AG04449 (cell line): ENCODE measurements at regions of chr17 and their contacts with region 1.

Region 1: DNA sequence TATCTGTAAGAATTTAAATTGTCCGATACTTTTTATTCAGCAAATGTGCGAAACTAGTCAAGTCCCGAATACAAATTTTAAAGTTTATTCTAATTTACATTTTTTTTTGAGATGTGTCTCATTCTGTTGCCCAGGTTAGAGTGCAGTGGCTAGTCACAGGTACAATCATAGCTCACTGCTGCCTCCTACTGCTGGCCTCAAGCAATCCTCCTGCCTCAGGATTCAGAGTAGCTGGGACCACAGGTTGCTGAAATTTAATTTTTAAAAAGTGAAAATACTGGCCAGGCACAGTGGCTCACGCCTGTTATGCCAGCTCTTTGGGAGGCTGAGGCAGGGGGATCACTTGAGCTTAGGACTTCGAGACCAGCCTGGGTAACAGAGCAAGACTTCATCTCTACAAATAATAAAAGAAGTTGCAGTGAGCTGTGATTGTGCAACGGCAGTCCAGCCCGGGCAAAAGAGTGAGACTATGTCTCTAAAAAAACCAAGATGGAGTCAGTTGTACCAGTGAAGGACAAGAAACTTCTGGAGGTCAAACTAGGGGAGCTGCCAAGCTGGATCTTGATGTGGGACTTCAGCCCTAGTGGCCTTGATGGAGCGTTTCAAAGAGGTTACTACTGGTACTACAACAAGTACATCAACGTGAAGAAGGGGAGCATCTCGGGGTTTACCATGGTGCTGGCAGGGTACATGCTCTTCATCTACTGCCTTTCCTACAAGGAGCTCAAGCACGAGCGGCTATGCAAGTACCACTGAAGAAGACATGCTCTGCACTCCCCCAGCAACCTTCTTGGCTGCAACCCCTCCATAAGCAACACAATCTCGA is 5.6 kb downstream of the POLG2 start:
- DNase-seq: no peak
- H3K4me3 ChIP-seq: no peak overlapping the region
- CTCF ChIP-seq: peak; percentile 65

Region 2: GRCh38 chr17:64306850-64307463 is 184.3 kb before region 1 on chr17:
- CTCF ChIA-PET with region 1: interaction called, 10 read pairs
- POLR2A ChIA-PET with region 1: no interaction called
- DNase-seq: peak; percentile 2
- H3K4me3 ChIP-seq: no peak overlapping the region
- CTCF ChIP-seq: peak; percentile 59

Region 3: DNA sequence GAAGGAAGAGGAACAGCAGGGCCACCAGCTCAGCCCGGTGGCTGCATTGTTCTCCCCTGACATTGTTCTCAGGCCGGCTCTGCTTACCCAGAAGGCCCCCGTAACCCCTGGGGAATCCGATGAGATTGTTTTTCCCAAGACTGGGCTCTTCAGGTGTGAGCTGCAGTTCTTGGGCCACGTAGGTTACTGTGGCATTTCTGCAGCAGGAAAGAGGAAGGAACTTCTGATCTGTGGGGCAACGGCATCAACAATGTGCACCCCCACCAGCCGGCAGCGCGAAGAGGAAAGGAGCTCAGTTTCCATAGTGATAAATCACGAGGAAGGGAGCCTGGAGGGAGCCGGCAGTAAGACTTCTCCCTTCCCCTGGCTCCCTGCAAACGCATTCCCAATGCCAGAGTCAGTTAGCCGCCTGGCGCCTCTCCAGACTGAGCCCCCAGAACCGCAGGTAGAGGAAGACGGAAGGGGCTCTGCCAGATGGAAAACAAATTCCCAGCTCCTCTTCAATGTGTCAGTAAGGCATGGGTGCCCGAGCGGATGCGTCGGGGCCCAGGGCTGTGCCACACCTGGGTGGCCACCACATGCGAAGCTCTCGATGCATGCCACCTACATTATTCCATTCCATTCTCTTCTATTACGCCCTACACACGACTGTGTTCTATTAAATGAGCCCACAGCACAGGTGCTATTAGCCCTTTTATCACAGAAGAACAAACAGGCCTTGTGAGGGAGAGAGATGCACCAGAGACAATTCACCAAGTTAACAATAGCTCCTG is 79.1 kb before region 1 on chr17:
- CTCF ChIA-PET with region 1: interaction called, 451 read pairs
- POLR2A ChIA-PET with region 1: interaction called, 3 read pairs
- DNase-seq: no peak
- H3K4me3 ChIP-seq: peak overlapping the region; percentile 15; the same call in 1 of the 2 replicates
- CTCF ChIP-seq: no peak

Region 4: DNA sequence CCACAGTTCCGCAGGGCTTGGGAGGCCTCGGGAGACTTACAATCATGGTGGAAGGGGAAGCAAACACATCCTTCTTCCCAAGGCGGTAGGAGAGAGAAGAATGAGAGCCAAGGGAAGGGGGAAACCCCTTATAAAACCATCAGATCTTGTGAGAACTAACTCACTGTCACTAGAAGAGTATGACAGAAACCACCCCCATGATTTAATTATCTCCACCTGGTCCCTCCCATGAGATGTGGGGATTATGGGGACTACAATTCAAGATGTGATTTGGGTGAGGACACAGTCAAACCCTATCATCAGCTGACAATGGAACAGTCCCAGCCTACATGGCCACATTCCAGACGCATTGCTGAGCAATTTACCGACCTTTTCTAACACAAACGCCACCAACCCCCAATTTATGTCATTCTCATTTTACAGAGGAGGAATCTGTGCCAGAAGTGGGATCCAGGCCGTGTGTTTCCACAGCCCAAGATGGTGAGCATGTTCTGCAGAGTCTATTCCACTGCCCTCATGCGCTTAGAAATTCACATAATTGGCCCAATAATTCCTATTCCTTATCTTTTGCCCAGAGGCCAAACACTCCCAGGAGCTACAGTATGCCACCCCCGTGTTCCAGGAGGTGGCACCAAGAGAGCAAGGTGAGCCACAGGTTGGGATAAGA is 25.1 kb before region 1 on chr17:
- CTCF ChIA-PET with region 1: interaction called, 12 read pairs
- POLR2A ChIA-PET with region 1: no interaction called
- DNase-seq: no peak
- H3K4me3 ChIP-seq: no peak overlapping the region
- CTCF ChIP-seq: no peak

Region 5: GRCh38 chr17:64479650-64480049 is 11.6 kb before region 1 on chr17:
- CTCF ChIA-PET with region 1: interaction called, 101 read pairs
- POLR2A ChIA-PET with region 1: interaction called, 7 read pairs
- DNase-seq: no peak
- H3K4me3 ChIP-seq: no peak overlapping the region
- CTCF ChIP-seq: no peak

Region 6: DNA sequence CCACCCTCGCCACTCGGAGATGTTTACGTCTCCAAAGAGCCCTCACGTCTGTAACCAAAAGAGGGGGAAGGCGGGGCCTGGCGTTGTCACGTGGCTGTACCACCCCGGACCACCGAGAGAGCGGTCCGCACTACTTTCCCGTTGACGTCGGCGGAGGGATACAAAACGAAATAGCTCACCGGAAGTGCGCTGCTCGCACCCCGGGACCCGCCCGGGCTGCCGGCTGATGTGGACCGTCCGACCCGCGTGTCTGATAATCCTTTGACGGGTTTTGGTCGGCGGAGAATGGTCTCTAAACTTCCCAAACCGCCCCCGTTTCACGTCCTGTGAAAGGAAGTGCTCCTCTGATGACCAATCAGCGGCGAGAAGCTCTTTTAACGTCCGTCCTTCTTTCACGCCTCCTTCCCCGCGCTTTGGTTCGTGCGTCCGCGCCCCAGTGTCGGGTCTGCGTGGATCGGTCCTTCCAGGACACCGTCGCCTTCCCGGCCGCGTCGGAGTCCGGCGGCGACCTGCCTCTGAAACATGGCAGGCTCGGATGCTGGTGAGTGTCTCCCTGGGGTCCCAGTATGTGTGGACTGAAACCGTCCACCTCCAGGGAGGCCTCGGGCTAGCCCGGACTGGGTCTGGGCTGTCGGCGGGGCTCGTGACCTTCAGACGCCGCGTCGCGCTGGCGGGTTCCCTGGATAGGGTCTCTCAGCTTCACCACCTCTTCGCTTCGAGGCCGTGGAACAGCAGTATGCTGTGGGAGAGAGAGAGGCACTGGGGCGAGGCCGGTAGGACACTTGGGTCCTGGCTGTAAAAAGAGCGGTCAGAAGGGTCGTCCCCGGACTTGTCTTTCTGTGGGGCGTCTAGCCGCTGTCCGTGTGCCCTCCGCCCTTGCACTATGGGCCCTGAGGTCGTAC is 15.6 kb after region 1 on chr17 and contains the start of gene CEP95:
- CTCF ChIA-PET with region 1: interaction called, 78 read pairs
- POLR2A ChIA-PET with region 1: interaction called, 55 read pairs
- DNase-seq: peak; percentile 95
- H3K4me3 ChIP-seq: peak within 1 kb of the TSS; percentile 97
- CTCF ChIP-seq: no peak

Region 7: GRCh38 chr17:64534175-64534574 is 42.9 kb after region 1 on chr17:
- CTCF ChIA-PET with region 1: no interaction called
- POLR2A ChIA-PET with region 1: no interaction called
- DNase-seq: no peak
- H3K4me3 ChIP-seq: no peak overlapping the region
- CTCF ChIP-seq: no peak

Region 8: GRCh38 chr17:64572638-64573154 is 81.4 kb after region 1 on chr17:
- CTCF ChIA-PET with region 1: no interaction called
- POLR2A ChIA-PET with region 1: no interaction called
- DNase-seq: peak; percentile 21
- H3K4me3 ChIP-seq: no peak overlapping the region
- CTCF ChIP-seq: no peak

Region 9: GRCh38 chr17:64599187-64599676 is 108.0 kb after region 1 on chr17:
- CTCF ChIA-PET with region 1: no interaction called
- POLR2A ChIA-PET with region 1: no interaction called
- DNase-seq: no peak
- H3K4me3 ChIP-seq: no peak overlapping the region
- CTCF ChIP-seq: no peak

Region 10: GRCh38 chr17:64657610-64658125 is 166.4 kb after region 1 on chr17:
- CTCF ChIA-PET with region 1: no interaction called
- POLR2A ChIA-PET with region 1: no interaction called
- DNase-seq: no peak
- H3K4me3 ChIP-seq: peak overlapping the region; percentile 21; the same call in 1 of the 2 replicates
- CTCF ChIP-seq: no peak